Natural killer cell (primary cell): ENCODE measurements at regions of chr2 and their contacts with region 1.

Region 1: GRCh38 chr2:136327162-136327852 is 209.4 kb upstream of the CXCR4 start:
- DNase-seq: peak; percentile 64 to 92
- ATAC-seq: peak; percentile 90 to 92 (median 92)
- H3K4me3 ChIP-seq: peak overlapping the region; percentile 19
- H3K4me3 Mint-ChIP-seq: peak overlapping the region; percentile 73
- H3K27ac ChIP-seq: peak overlapping the region; percentile 91
- H3K27ac Mint-ChIP-seq: peak overlapping the region; percentile 86 to 91
- H3K4me1 ChIP-seq: peaks cover 18% of the 10 kb centered on the region
- H3K4me1 Mint-ChIP-seq: peaks cover 16 to 38% of the 10 kb centered on the region in 2 donors
- H3K27me3 ChIP-seq: no peaks in the 10 kb centered on the region
- H3K27me3 Mint-ChIP-seq: no peaks in the 10 kb centered on the region
- CTCF ChIP-seq: no peak

Region 2: GRCh38 chr2:136008205-136008865 is 319.0 kb before region 1 on chr2:
- intact Hi-C with region 1: loop called (anchors 2 kb)
- DNase-seq: peak; percentile 70 to 88
- ATAC-seq: peak; percentile 88 to 95 (median 93)
- H3K4me3 ChIP-seq: no peak overlapping the region
- H3K4me3 Mint-ChIP-seq: peak overlapping the region; percentile 57
- H3K27ac ChIP-seq: peak overlapping the region; percentile 59
- H3K27ac Mint-ChIP-seq: peak overlapping the region; percentile 88 to 91
- H3K4me1 ChIP-seq: peaks cover 28% of the 10 kb centered on the region
- H3K4me1 Mint-ChIP-seq: peaks cover 20 to 28% of the 10 kb centered on the region in 2 donors
- H3K27me3 ChIP-seq: no peaks in the 10 kb centered on the region
- H3K27me3 Mint-ChIP-seq: peaks cover 0 to 6% of the 10 kb centered on the region in 2 donors
- CTCF ChIP-seq: no peak

Region 3: GRCh38 chr2:136129601-136130000 is 197.7 kb before region 1 on chr2:
- intact Hi-C with region 1: loop called (anchors 1 kb)
- DNase-seq: peak in 1 of 2 donors; percentile 91
- ATAC-seq: peak; percentile 48 to 72 (median 69)
- H3K4me3 ChIP-seq: no peak overlapping the region
- H3K4me3 Mint-ChIP-seq: peak overlapping the region; percentile 75
- H3K27ac ChIP-seq: peak overlapping the region; percentile 90
- H3K27ac Mint-ChIP-seq: peak overlapping the region; percentile 93 to 99
- H3K4me1 ChIP-seq: peaks cover 86% of the 10 kb centered on the region
- H3K4me1 Mint-ChIP-seq: peaks cover 54 to 81% of the 10 kb centered on the region in 2 donors
- H3K27me3 ChIP-seq: no peaks in the 10 kb centered on the region
- H3K27me3 Mint-ChIP-seq: peaks cover 3 to 6% of the 10 kb centered on the region in 2 donors
- CTCF ChIP-seq: no peak

Region 4: DNA sequence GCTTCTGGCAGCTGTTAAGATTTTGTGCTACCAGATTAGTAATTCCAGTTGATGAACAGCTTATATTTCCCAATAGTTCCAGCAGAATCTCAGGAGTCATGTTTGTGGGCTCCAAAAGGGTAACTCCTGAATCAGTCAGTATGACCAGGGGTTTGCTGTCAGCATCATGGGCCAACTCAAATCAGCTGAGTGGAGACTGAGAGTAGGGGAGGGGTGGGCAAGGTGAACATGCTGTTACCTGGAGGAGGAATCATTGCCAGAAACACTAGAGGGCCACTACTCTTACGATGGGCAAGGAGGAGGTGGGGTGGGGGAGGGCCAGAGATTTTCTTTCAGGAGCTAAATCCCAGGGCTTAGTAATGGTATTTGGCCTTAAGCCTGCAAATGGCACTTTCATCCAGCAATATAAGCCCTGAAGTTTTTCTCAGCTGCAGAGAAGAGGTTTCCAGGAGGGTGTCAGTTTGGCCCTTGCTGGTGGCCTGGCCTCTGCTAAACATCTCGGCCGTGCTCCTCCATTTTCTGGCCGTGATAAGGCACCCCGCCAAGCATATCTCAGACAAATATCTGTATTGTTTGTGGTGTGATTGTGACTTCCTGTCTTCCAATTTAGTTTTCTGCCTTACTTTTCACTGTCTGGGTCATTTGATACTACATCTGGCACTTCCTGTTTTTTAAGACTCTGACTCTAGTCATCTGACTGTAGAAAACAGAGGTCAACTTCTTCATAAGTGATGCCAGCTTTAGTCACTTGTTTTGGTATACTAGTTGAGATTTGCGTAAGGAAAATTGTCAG is 88.8 kb before region 1 on chr2:
- intact Hi-C with region 1: loop called (anchors 1 kb)
- DNase-seq: peak; percentile 33 to 81
- ATAC-seq: peak; percentile 61 to 85 (median 77)
- H3K4me3 ChIP-seq: no peak overlapping the region
- H3K4me3 Mint-ChIP-seq: peak overlapping the region; percentile 11
- H3K27ac ChIP-seq: peak overlapping the region; percentile 94
- H3K27ac Mint-ChIP-seq: peak overlapping the region; percentile 93 to 97
- H3K4me1 ChIP-seq: peaks cover 43% of the 10 kb centered on the region
- H3K4me1 Mint-ChIP-seq: peaks cover 54 to 63% of the 10 kb centered on the region in 2 donors
- H3K27me3 ChIP-seq: no peaks in the 10 kb centered on the region
- H3K27me3 Mint-ChIP-seq: peaks cover 0 to 3% of the 10 kb centered on the region in 2 donors
- CTCF ChIP-seq: no peak

Region 5: DNA sequence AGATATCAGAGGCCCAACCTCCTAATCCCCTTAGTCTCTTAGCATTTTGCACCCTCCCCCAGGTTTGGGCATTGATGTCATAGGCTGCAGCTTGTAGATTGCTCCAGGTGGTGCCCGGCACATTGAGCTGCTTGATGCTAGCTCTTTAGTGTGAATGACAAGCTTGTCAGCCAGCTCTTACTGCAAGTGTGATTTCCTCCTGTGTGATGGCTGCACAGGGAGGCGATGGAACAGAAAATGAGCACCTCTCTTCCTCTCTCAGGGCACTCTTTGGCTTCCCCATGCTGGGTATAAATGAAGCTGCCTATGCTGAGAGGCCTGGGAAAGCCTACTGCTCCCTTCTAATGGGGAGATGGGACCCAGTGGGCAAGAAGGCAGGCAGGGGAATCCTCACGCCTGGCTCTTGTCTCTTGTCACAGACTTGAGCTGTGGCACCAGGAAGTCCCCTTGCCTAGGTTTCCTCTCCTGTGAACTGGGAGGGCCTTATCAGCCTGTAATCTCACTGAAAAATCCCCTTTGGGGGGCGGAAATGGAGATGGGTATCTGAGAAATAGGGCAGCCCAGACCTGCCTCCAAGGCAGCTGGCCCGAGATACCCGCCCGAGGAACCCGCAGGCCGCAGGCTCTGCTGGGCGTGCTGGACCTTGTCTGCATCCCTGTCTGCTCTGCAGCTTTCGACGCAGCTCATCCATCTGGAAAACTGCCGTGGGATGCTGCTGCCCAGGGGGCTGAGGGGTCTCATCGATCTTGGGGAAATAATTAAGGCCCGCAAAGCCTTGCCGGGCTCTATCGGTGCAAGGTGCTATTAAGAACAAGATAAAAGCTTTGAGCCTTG is 45.8 kb before region 1 on chr2:
- intact Hi-C with region 1: loop called (anchors 1 kb)
- DNase-seq: peak; percentile 46 to 91
- ATAC-seq: peak; percentile 85 to 91 (median 85)
- H3K4me3 ChIP-seq: no peak overlapping the region
- H3K4me3 Mint-ChIP-seq: peak overlapping the region; percentile 13
- H3K27ac ChIP-seq: peak overlapping the region; percentile 66
- H3K27ac Mint-ChIP-seq: peak overlapping the region; percentile 91 to 92
- H3K4me1 ChIP-seq: peaks cover 35% of the 10 kb centered on the region
- H3K4me1 Mint-ChIP-seq: peaks cover 28 to 29% of the 10 kb centered on the region in 2 donors
- H3K27me3 ChIP-seq: no peaks in the 10 kb centered on the region
- H3K27me3 Mint-ChIP-seq: no peaks in the 10 kb centered on the region
- CTCF ChIP-seq: no peak

Region 6: GRCh38 chr2:136305517-136306192 is 21.7 kb before region 1 on chr2:
- intact Hi-C with region 1: loop called (anchors 1 kb)
- DNase-seq: peak; percentile 49 to 76
- ATAC-seq: peak; percentile 96 to 100 (median 98)
- H3K4me3 ChIP-seq: no peak overlapping the region
- H3K4me3 Mint-ChIP-seq: no peak overlapping the region
- H3K27ac ChIP-seq: no peak overlapping the region
- H3K27ac Mint-ChIP-seq: peak overlapping the region in 1 of 2 donors; percentile 72
- H3K4me1 ChIP-seq: peaks cover 10% of the 10 kb centered on the region
- H3K4me1 Mint-ChIP-seq: peaks cover 9 to 11% of the 10 kb centered on the region in 2 donors
- H3K27me3 ChIP-seq: no peaks in the 10 kb centered on the region
- H3K27me3 Mint-ChIP-seq: peaks cover 10 to 14% of the 10 kb centered on the region in 2 donors
- CTCF ChIP-seq: no peak

Region 7: GRCh38 chr2:136486115-136486514 is 158.8 kb after region 1 on chr2:
- intact Hi-C with region 1: no loop called
- DNase-seq: no peak
- ATAC-seq: no peak
- H3K4me3 ChIP-seq: no peak overlapping the region
- H3K4me3 Mint-ChIP-seq: no peak overlapping the region
- H3K27ac ChIP-seq: no peak overlapping the region
- H3K27ac Mint-ChIP-seq: no peak overlapping the region
- H3K4me1 ChIP-seq: no peaks in the 10 kb centered on the region
- H3K4me1 Mint-ChIP-seq: no peaks in the 10 kb centered on the region
- H3K27me3 ChIP-seq: no peaks in the 10 kb centered on the region
- H3K27me3 Mint-ChIP-seq: peaks cover 0 to 2% of the 10 kb centered on the region in 2 donors
- CTCF ChIP-seq: no peak